ENCODE measurements at regions of chr2 and their contacts with region 1.

Region 1: GRCh38 chr2:64144057-64145013 is at the start of gene PELI1:
- DNase-seq: peak; percentile 96
- H3K4me3 Mint-ChIP-seq: peak within 1 kb of the TSS; percentile 88
- H3K27ac Mint-ChIP-seq: peak within 1 kb of the TSS; percentile 95
- H3K4me1 Mint-ChIP-seq: peaks cover 6% of the 10 kb centered on the region
- H3K27me3 Mint-ChIP-seq: no peaks in the 10 kb centered on the region
- CTCF ChIP-seq: peak; percentile 20
- total RNA-seq, gene PELI1: 13.5 and 16.3 TPM in 2 replicates

Region 2: DNA sequence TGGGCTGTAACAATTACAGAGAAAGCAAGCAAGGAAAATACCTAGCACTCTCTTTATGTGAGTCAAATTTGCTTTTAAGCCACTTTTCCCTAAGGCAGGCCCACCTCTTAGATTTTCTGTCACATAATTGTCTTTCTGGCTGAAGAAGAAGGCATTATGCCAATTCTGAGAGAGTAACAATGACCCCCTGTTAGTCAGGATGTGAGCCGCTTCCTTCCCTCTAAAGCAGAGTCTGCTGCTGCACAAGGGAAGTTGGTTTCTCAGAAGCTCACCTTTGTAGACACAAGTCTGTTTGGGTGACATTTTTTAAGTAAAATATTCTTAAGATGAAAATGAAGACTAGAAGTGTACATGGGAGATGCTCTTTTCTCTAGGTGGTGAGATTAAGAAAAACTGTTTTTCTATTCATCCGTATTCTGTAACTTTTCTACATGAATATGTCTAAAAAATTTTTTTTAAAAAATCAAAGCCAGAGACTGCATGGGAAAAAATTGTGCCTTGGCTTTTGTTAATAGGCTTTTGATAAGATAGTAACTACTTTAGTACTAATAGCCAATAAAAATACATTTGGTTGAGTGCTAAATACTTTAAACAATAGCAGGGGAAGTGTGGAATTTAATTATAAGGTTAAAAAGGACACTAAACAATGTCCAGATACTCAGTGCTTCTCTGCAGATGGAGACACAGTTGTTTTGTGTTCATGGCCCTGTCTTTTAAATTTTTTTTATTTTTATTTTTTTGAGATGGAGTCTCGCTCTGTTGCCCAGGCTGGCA is 91.7 kb before region 1 on chr2:
- CTCF ChIA-PET with region 1: interaction called, 9 read pairs
- POLR2A ChIA-PET with region 1: interaction called, 9 read pairs
- intact Hi-C with region 1: loop called (anchors 1 kb)
- DNase-seq: no peak
- H3K4me3 Mint-ChIP-seq: no peak overlapping the region
- H3K27ac Mint-ChIP-seq: no peak overlapping the region
- H3K4me1 Mint-ChIP-seq: peaks cover 23% of the 10 kb centered on the region
- H3K27me3 Mint-ChIP-seq: no peaks in the 10 kb centered on the region
- CTCF ChIP-seq: no peak

Region 3: GRCh38 chr2:64114063-64114911 is 30.0 kb before region 1 on chr2:
- CTCF ChIA-PET with region 1: interaction called, 5 read pairs
- POLR2A ChIA-PET with region 1: interaction called, 11 read pairs
- intact Hi-C with region 1: no loop called
- DNase-seq: peak; percentile 38
- H3K4me3 Mint-ChIP-seq: peak overlapping the region; percentile 35
- H3K27ac Mint-ChIP-seq: peak overlapping the region; percentile 87
- H3K4me1 Mint-ChIP-seq: peaks cover 16% of the 10 kb centered on the region
- H3K27me3 Mint-ChIP-seq: no peaks in the 10 kb centered on the region
- CTCF ChIP-seq: no peak

Region 4: DNA sequence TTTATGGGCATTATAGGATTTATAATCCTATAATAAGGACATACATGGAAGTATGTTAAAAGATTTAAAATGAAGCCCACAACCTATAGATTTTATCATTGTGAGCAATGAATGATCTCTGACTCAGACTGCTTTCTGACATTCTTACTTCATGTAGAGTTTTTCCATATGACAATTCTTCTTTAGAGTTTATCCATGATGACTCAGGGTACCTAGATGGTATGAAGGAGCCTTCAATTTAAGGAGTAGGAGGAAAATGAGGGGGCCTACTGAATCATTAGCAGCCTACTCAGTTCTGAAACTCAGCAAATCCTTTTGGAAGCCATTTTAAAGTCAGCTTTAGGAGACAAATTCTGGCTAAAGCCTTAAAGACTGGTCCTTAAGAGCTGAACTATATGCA is 10.5 kb before region 1 on chr2:
- CTCF ChIA-PET with region 1: interaction called, 3 read pairs
- POLR2A ChIA-PET with region 1: interaction called, 43 read pairs
- intact Hi-C with region 1: no loop called
- DNase-seq: peak; percentile 44
- H3K4me3 Mint-ChIP-seq: no peak overlapping the region
- H3K27ac Mint-ChIP-seq: peak overlapping the region; percentile 29
- H3K4me1 Mint-ChIP-seq: peaks cover 61% of the 10 kb centered on the region
- H3K27me3 Mint-ChIP-seq: no peaks in the 10 kb centered on the region
- CTCF ChIP-seq: no peak

Region 5: DNA sequence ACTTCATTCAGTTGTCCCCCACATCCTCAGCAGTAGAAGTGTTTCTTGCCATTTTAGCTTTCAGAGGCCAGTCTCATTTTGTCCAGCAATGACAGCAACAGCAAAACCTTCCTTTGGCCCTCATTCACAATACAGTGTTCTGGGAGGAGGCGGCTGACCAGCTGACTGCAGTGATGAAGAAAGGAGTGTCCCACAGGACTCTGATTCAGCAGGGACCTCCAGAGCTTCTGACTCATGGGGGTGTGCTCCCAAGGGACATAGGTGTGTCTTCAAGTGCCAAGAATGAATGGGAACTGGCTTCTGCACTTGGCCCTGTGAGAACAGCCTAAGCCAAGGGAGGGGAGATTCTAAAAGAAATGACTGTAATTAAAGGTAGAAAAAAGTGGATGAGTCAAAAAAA is 146.8 kb after region 1 on chr2:
- CTCF ChIA-PET with region 1: no interaction called
- POLR2A ChIA-PET with region 1: interaction called, 3 read pairs
- intact Hi-C with region 1: loop called (anchors 5 kb)
- DNase-seq: peak; percentile 89
- H3K4me3 Mint-ChIP-seq: no peak overlapping the region
- H3K27ac Mint-ChIP-seq: no peak overlapping the region
- H3K4me1 Mint-ChIP-seq: peaks cover 21% of the 10 kb centered on the region
- H3K27me3 Mint-ChIP-seq: peaks cover 12% of the 10 kb centered on the region
- CTCF ChIP-seq: no peak